H1 (cell line): ENCODE measurements at regions of chr7 and their contacts with region 1.

Region 1: DNA sequence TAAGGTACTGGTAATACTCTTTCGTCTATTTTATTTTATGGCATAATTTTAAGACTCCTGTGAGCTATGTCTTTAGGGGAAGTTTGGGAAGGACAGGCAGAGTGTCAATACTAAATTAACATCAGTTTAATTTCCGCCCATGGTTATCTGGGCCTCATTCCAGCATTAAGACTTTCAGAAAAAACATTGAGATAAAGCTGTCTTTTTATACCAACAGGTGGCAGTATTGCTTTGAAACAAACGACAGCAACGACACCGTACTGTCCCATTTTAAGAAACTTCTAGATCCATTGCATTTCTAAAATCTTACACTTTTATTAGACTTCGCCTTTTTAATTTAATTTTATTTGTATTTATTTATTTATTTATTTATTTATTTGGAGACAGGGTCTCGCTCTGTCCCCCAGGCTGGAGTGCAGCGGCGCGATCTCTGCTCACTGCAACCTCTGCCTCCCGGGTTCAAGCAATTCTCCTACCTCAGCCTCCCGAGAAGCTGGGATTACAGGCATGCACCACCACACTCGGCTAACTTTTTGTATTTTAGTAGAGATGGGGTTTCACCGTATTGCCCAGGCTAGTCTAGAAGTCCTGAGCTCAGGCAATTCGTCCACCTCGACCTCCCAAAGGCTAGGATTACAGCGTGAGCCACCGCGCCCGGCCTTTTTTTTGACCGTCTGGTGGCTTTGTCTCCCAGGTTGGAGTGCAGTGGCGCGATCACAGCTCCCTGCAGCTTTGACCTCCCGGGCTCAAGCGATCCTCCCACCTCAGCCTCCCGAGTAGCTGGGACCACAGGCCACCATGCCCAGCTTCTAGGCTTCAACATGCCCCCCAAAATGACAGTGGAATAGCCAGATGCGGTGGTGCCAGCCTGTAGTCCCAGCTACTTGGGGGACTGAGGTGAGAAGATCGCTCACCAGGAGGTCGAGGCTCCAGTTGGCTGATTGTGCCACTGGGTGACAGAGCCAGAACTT is 78.7 kb upstream of the C1GALT1 start:
- DNase-seq: no peak
- H3K4me3 ChIP-seq: no peak overlapping the region
- H3K27ac ChIP-seq: no peak overlapping the region
- H3K4me1 ChIP-seq: peaks cover 15 to 25% (median 19%) of the 10 kb centered on the region in 4 experiments; a peak in 6 of 7 replicates
- H3K27me3 ChIP-seq: no peaks in the 10 kb centered on the region
- CTCF ChIP-seq: peak in 2 of 3 experiments; percentile 32 to 53; a peak in 2 of 4 replicates
- EP300 ChIP-seq: no peak
- POLR2A ChIP-seq: no peak
- RAD21 ChIP-seq: peak; percentile 71 to 76

Region 2: GRCh38 chr7:7119729-7120128 is 16.1 kb after region 1 on chr7:
- CTCF ChIA-PET with region 1: interaction called, 11 read pairs
- POLR2A ChIA-PET with region 1: interaction called, 4 read pairs
- DNase-seq: no peak
- H3K4me3 ChIP-seq: no peak overlapping the region
- H3K27ac ChIP-seq: no peak overlapping the region
- H3K4me1 ChIP-seq: no peaks in the 10 kb centered on the region
- H3K27me3 ChIP-seq: no peaks in the 10 kb centered on the region
- CTCF ChIP-seq: no peak
- EP300 ChIP-seq: no peak
- POLR2A ChIP-seq: no peak
- RAD21 ChIP-seq: no peak

Region 3: GRCh38 chr7:7175075-7175675 is 71.5 kb after region 1 on chr7:
- CTCF ChIA-PET with region 1: interaction called, 11 read pairs
- POLR2A ChIA-PET with region 1: no interaction called
- DNase-seq: no peak
- H3K4me3 ChIP-seq: no peak overlapping the region
- H3K27ac ChIP-seq: no peak overlapping the region
- H3K4me1 ChIP-seq: peaks cover 0 to 7% (median 0%) of the 10 kb centered on the region in 4 experiments; a peak in 2 of 7 replicates
- H3K27me3 ChIP-seq: no peaks in the 10 kb centered on the region
- CTCF ChIP-seq: no peak
- EP300 ChIP-seq: no peak
- POLR2A ChIP-seq: no peak
- RAD21 ChIP-seq: no peak

Region 4: GRCh38 chr7:7182156-7183060 is 78.8 kb after region 1 on chr7 and contains the start of gene C1GALT1:
- CTCF ChIA-PET with region 1: interaction called, 19 read pairs
- POLR2A ChIA-PET with region 1: interaction called, 11 read pairs
- DNase-seq: peak; percentile 92 to 95
- H3K4me3 ChIP-seq: peak within 1 kb of the TSS; percentile 80 to 91 (median 84)
- H3K27ac ChIP-seq: peak within 1 kb of the TSS; percentile 78
- H3K4me1 ChIP-seq: peaks cover 0 to 14% (median 10%) of the 10 kb centered on the region in 4 experiments; a peak in 5 of 7 replicates
- H3K27me3 ChIP-seq: no peaks in the 10 kb centered on the region
- CTCF ChIP-seq: peak; percentile 52 to 64 (median 63)
- EP300 ChIP-seq: no peak
- POLR2A ChIP-seq: peak; percentile 62 to 77; a peak in 2 of 3 replicates
- RAD21 ChIP-seq: peak; percentile 57 to 64
- total RNA-seq, gene C1GALT1: 94.0 and 94.2 TPM in 2 replicates

Region 5: DNA sequence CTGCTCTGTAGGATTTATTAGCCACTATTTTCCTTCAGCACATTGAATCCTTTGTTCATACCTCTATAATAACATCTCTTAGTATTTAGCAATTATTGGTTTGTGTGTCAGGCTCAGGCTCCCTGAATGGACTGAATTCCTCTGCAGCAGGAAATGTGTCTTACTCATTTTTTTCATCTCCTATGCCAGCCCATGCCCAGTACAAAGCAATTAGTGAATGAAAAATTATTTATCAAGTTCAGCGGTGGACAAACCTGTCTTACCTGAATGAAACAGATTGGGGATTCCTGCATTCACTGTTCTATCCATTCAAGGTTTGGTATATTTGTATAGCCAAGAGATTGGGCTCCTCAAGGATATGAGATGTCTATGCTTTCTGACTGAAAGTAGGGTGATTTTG is 132.4 kb after region 1 on chr7:
- CTCF ChIA-PET with region 1: interaction called, 12 read pairs
- POLR2A ChIA-PET with region 1: no interaction called
- DNase-seq: no peak
- H3K4me3 ChIP-seq: no peak overlapping the region
- H3K27ac ChIP-seq: no peak overlapping the region
- H3K4me1 ChIP-seq: peaks cover 0 to 22% (median 13%) of the 10 kb centered on the region in 4 experiments; a peak in 4 of 7 replicates
- H3K27me3 ChIP-seq: no peaks in the 10 kb centered on the region
- CTCF ChIP-seq: no peak
- EP300 ChIP-seq: no peak
- POLR2A ChIP-seq: no peak
- RAD21 ChIP-seq: no peak

Region 6: DNA sequence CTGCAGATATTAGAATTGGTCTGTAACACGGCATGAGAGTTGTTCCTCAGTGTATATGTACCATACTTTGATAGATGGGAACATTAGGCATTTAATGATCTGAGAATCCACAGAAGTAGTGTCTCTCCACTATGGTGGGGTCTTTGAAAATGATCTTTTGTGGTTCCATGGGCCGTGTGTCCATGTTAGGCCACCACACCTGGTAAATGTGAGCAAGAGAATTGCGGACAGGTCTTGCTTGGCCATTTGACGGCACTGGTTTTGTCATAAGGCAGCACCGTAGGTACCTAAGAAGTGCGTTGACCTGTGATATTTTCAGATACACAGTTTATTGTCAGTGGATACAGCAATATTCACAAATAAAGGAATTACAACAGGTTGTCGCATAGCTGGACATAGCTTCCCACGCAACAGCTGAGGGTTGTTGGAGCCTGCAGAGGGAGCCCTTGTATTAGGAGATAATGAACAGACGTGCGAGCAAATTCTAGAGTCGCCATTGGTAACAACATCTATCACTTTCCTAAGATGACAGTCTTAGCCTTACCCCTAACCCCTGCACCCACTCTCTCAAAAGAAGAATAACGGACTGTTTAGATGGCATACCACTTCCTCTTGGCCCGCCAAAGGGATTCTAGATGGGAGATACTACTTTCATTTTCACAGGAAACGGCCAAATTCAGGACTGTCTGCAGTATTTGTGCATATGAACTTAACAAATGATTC is 320.7 kb after region 1 on chr7:
- CTCF ChIA-PET with region 1: interaction called, 14 read pairs
- POLR2A ChIA-PET with region 1: no interaction called
- DNase-seq: peak; percentile 19 to 59
- H3K4me3 ChIP-seq: no peak overlapping the region
- H3K27ac ChIP-seq: no peak overlapping the region
- H3K4me1 ChIP-seq: peaks cover 0 to 4% (median 0%) of the 10 kb centered on the region in 4 experiments; a peak in 1 of 7 replicates
- H3K27me3 ChIP-seq: no peaks in the 10 kb centered on the region
- CTCF ChIP-seq: peak; percentile 67 to 83 (median 79)
- EP300 ChIP-seq: no peak
- POLR2A ChIP-seq: no peak
- RAD21 ChIP-seq: peak; percentile 95